ENCODE measurements at regions of chr9 and their contacts with region 1.

Region 1: GRCh38 chr9:110183208-110184145 is 24.5 kb downstream of the C9orf152 start:
- DNase-seq: peak; percentile 87
- H3K4me3 ChIP-seq: no peak overlapping the region
- H3K27ac ChIP-seq: peak overlapping the region in 2 of 4 donors; percentile 43 to 61
- H3K4me1 ChIP-seq: peaks cover 3 to 23% (median 18%) of the 10 kb centered on the region in 4 donors
- H3K27me3 ChIP-seq: no peaks in the 10 kb centered on the region
- CTCF ChIP-seq: peak; percentile 70 to 79 (median 74)
- EP300 ChIP-seq: no peak
- POLR2A ChIP-seq: no peak

Region 2: DNA sequence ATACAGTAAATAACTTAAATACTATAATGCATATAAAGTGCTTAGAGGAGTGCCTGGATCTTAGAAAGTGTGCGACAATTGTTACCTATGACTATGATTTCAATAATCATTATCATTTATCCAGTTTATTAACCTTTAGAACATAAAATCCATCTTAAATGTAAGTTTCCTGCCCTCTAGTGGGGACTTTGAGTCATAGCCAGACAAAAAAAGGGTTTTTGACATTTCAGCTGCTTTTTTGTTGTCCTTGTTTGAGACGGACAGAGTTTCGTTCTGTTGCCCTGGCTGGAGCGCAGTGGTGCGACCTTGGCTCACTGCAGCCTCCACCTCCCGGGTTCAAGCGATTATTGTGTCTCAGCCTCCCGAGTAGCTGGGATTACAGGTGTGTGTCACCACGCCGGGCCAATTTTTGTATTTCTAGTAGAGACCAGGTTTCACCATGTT is 34.2 kb after region 1 on chr9:
- intact Hi-C with region 1: loop called (anchors 1 kb)
- DNase-seq: no peak
- H3K4me3 ChIP-seq: no peak overlapping the region
- H3K27ac ChIP-seq: no peak overlapping the region
- H3K4me1 ChIP-seq: no peaks in the 10 kb centered on the region
- H3K27me3 ChIP-seq: no peaks in the 10 kb centered on the region
- CTCF ChIP-seq: peak; percentile 56 to 84 (median 64)
- EP300 ChIP-seq: no peak
- POLR2A ChIP-seq: no peak

Region 3: DNA sequence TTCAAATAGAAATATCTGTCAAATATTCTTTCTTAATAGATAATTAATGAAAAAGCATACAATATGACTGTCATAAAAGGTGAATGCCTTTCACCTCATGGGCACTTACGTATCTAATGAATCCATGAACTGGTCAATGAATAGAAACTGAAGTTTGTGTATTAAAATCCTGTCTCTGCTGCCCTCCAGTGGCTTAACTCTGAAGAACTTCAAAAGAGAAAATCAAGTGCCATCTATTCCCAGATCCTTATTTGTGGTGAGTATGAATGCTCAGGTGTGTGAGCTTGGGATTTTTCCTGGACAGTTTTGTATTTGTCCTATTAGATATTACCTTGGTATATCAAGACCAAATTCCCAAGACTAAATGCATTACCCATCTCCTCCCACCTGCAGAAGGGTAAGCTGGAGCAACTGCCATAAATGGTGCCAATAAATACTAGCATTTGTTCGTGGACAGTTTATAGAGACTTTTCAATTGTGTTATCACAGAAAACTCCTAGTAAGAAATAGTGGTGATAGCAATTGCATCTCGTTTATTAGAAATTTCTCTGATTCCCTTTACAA is 440.1 kb after region 1 on chr9:
- intact Hi-C with region 1: loop called (anchors 2 kb)
- DNase-seq: no peak
- H3K4me3 ChIP-seq: no peak overlapping the region
- H3K27ac ChIP-seq: no peak overlapping the region
- H3K4me1 ChIP-seq: peaks cover 0 to 9% (median 2%) of the 10 kb centered on the region in 4 donors
- H3K27me3 ChIP-seq: no peaks in the 10 kb centered on the region
- CTCF ChIP-seq: peak in 3 of 4 experiments; percentile 46 to 60 (median 57)
- EP300 ChIP-seq: no peak
- POLR2A ChIP-seq: no peak